Heart right ventricle (tissue), 16 donors: ENCODE measurements at regions of chr5 and their contacts with region 1.

Region 1: GRCh38 chr5:74919487-74919886 is 53.3 kb upstream of the FAM169A start:
- DNase-seq: no peak
- ATAC-seq: peak in 2 of 8 donors; percentile 46 to 61
- H3K4me3 ChIP-seq: no peak overlapping the region
- H3K27ac ChIP-seq: no peak overlapping the region
- H3K4me1 ChIP-seq: no peaks in the 10 kb centered on the region
- H3K27me3 ChIP-seq: peaks cover 0 to 3% (median 0%) of the 10 kb centered on the region in 7 donors
- CTCF ChIP-seq: peak; percentile 16 to 61 (median 52)

Region 2: DNA sequence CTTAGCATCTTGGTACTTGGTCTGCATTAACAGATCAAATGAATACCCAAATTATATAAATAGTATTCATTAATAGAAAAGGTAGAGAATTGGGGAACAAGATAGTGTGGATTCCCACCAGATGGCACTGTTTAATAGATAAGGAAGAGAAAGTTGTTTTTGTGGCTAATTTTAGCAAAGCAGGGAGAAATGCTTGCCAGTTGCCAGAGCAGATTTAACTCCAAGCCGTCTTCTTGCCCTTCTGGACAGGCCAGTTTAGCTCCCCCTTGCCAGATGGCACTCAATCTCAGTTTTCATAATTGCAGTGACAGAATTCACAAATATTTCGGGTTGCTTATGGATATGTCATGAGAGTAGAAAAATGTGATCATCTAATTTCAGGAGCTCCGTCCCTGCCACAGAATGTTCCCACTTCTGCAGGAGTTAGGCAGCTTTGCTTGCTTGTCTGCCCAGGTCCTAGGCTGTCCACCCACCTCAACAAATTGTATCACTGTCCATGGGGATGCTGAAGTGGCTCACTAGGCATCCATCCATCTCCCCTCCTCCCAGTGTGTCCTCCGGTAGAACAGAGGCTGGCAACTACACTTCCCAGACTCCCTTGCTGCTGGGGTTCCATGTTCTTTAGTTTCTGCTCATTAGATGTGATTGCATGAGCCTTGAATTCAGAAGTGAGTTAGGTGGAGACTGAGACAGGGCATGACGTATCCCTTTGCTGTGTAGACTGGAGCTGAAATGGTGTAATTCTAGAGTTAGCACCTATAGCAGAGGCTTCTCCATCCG is 246.3 kb before region 1 on chr5:
- intact Hi-C with region 1: loop called in 8 of 10 experiments (anchors 2 to 10 kb)
- DNase-seq: peak in 1 of 2 donors; percentile 17
- ATAC-seq: peak; percentile 55 to 81 (median 76)
- H3K4me3 ChIP-seq: peak overlapping the region in 6 of 10 donors; percentile 27 to 40 (median 38)
- H3K27ac ChIP-seq: peak overlapping the region in 7 of 10 donors; percentile 4 to 74 (median 63)
- H3K4me1 ChIP-seq: peaks cover 0 to 21% (median 9%) of the 10 kb centered on the region in 9 donors
- H3K27me3 ChIP-seq: no peaks in the 10 kb centered on the region
- CTCF ChIP-seq: peak in 8 of 9 donors; percentile 24 to 59 (median 52)

Region 3: DNA sequence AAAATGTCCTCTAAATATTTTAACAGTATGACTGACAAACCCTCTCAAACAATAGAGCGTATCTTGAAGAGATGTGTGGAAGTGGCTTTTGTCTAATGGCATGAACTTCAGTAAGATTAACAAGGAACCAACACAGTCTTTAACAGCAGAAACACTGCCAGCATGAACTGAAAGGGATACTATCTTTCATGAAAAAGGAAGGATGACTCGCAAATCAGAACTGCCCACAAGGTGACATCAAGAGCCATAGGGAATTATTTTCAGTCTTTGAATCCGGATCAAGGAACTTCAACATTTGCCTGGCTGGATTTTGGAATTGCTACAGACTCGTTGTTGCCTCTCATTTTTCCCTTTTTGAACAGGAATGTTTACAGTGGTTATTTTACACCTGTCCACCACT is 239.5 kb before region 1 on chr5:
- intact Hi-C with region 1: loop called in 3 of 10 experiments (anchors 5 to 10 kb)
- DNase-seq: no peak
- ATAC-seq: no peak
- H3K4me3 ChIP-seq: no peak overlapping the region
- H3K27ac ChIP-seq: no peak overlapping the region
- H3K4me1 ChIP-seq: peaks cover 0 to 7% (median 0%) of the 10 kb centered on the region in 9 donors
- H3K27me3 ChIP-seq: no peaks in the 10 kb centered on the region
- CTCF ChIP-seq: no peak

Region 4: GRCh38 chr5:74772359-74772758 is 147.1 kb before region 1 on chr5:
- intact Hi-C with region 1: loop called in 9 of 10 experiments (anchors 2 to 10 kb)
- DNase-seq: no peak
- ATAC-seq: no peak
- H3K4me3 ChIP-seq: no peak overlapping the region
- H3K27ac ChIP-seq: no peak overlapping the region
- H3K4me1 ChIP-seq: peaks cover 0 to 13% (median 10%) of the 10 kb centered on the region in 9 donors
- H3K27me3 ChIP-seq: no peaks in the 10 kb centered on the region
- CTCF ChIP-seq: no peak